Caco-2 (cell line): ENCODE measurements at regions of chr9 and their contacts with region 1.

Region 1: GRCh38 chr9:90102292-90102901 is 497.6 kb downstream of the GADD45G start:
- DNase-seq: peak; percentile 73 to 81
- H3K4me3 ChIP-seq: no peak overlapping the region
- H3K4me3 Mint-ChIP-seq: no peak overlapping the region
- H3K27ac Mint-ChIP-seq: no peak overlapping the region
- H3K4me1 ChIP-seq: no peaks in the 10 kb centered on the region
- H3K4me1 Mint-ChIP-seq: no peaks in the 10 kb centered on the region
- H3K27me3 ChIP-seq: no peaks in the 10 kb centered on the region
- H3K27me3 Mint-ChIP-seq: no peaks in the 10 kb centered on the region
- CTCF ChIP-seq: peak; percentile 61 to 68

Region 2: GRCh38 chr9:89597711-89598625 is 504.4 kb before region 1 on chr9:
- CTCF ChIA-PET with region 1: interaction called, 55 read pairs
- POLR2A ChIA-PET with region 1: no interaction called
- intact Hi-C with region 1: loop called (anchors 1 kb)
- DNase-seq: peak in 1 of 2 experiments; percentile 61
- H3K4me3 ChIP-seq: no peak overlapping the region
- H3K4me3 Mint-ChIP-seq: no peak overlapping the region
- H3K27ac Mint-ChIP-seq: no peak overlapping the region
- H3K4me1 ChIP-seq: peaks cover 11% of the 10 kb centered on the region
- H3K4me1 Mint-ChIP-seq: peaks cover 5% of the 10 kb centered on the region
- H3K27me3 ChIP-seq: no peaks in the 10 kb centered on the region
- H3K27me3 Mint-ChIP-seq: no peaks in the 10 kb centered on the region
- CTCF ChIP-seq: peak; percentile 57 to 62

Region 3: DNA sequence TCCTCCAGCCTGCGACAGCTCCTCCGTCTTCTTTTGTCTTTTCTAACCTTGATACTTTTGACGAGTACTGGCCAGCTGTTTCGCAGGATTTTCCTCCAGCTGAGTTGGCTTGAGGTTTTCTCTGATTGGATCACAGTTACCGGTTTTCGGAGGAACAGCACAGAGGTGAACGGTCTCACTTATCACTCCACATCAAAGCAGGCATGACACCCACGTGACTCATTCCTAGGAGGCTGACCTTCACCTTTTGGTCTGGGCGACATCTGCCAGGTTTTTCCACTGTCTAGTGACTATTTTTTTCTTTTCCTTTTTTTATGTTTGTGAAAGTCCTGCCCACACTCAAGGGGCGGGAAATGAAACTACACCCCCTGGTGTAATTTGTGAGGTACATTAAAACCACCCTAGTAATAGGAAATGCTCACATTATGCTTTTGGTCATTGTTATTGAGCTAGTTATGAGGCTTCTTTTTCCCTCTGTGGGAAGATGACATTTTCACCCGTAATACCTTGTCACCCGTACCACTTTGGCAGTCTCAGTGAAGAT is 178.4 kb before region 1 on chr9:
- CTCF ChIA-PET with region 1: interaction called, 3 read pairs
- POLR2A ChIA-PET with region 1: interaction called, 3 read pairs
- intact Hi-C with region 1: loop called (anchors 5 kb)
- DNase-seq: peak; percentile 71 to 80
- H3K4me3 ChIP-seq: no peak overlapping the region
- H3K4me3 Mint-ChIP-seq: peak overlapping the region; percentile 67
- H3K27ac Mint-ChIP-seq: peak overlapping the region; percentile 84
- H3K4me1 ChIP-seq: peaks cover 34% of the 10 kb centered on the region
- H3K4me1 Mint-ChIP-seq: peaks cover 53% of the 10 kb centered on the region
- H3K27me3 ChIP-seq: no peaks in the 10 kb centered on the region
- H3K27me3 Mint-ChIP-seq: no peaks in the 10 kb centered on the region
- CTCF ChIP-seq: no peak

Region 4: DNA sequence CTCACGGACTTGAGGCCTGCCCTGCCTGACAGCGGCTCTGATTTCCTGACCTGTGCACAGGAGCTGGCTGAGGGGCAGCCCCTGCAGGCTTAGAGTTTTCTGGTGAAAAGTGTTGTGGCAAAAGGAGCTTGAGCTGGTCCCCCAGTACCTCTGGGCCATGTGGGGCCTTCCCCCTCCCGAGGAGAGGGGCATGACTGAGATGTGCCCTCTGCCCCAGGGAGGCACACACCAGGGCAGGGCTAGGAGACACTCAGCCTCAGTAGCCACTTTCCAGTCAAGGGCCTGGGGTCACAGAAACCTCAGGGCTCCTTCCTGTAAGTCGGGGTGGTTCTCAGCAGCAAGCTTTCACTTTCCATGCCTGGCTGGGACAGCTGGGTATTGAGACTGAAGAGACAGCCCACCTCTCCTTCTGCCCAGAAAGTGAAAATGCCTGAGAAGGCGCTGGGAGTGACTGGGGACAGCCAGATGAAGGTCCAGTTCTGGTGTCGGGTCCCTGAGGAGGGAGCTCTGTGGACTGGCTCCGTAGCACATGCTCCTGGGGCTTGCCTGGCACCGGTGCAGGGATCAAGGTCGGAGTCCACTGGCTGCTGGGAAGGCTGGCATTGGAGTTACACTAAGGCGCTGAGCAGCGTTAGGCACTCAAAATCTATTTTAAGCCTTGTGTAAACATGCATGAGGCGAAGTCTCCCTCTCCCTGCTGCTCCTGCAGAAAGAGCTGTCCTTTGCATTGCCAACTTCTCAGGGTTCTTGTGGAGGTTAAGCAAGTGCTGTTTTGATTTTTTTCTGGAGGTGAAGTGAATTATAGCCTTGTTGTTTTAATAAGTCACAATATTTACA is 102.6 kb before region 1 on chr9:
- CTCF ChIA-PET with region 1: no interaction called
- POLR2A ChIA-PET with region 1: no interaction called
- intact Hi-C with region 1: loop called (anchors 5 kb)
- DNase-seq: peak; percentile 37 to 52
- H3K4me3 ChIP-seq: no peak overlapping the region
- H3K4me3 Mint-ChIP-seq: peak overlapping the region; percentile 38
- H3K27ac Mint-ChIP-seq: peak overlapping the region; percentile 35
- H3K4me1 ChIP-seq: peaks cover 26% of the 10 kb centered on the region
- H3K4me1 Mint-ChIP-seq: peaks cover 11% of the 10 kb centered on the region
- H3K27me3 ChIP-seq: no peaks in the 10 kb centered on the region
- H3K27me3 Mint-ChIP-seq: no peaks in the 10 kb centered on the region
- CTCF ChIP-seq: no peak

Region 5: GRCh38 chr9:90124961-90125360 is 22.6 kb after region 1 on chr9:
- CTCF ChIA-PET with region 1: no interaction called
- POLR2A ChIA-PET with region 1: no interaction called
- intact Hi-C with region 1: no loop called
- DNase-seq: no peak
- H3K4me3 ChIP-seq: no peak overlapping the region
- H3K4me3 Mint-ChIP-seq: no peak overlapping the region
- H3K27ac Mint-ChIP-seq: no peak overlapping the region
- H3K4me1 ChIP-seq: no peaks in the 10 kb centered on the region
- H3K4me1 Mint-ChIP-seq: no peaks in the 10 kb centered on the region
- H3K27me3 ChIP-seq: no peaks in the 10 kb centered on the region
- H3K27me3 Mint-ChIP-seq: peaks cover 10% of the 10 kb centered on the region
- CTCF ChIP-seq: no peak

Region 6: GRCh38 chr9:90165281-90165680 is 62.9 kb after region 1 on chr9:
- CTCF ChIA-PET with region 1: no interaction called
- POLR2A ChIA-PET with region 1: no interaction called
- intact Hi-C with region 1: no loop called
- DNase-seq: no peak
- H3K4me3 ChIP-seq: no peak overlapping the region
- H3K4me3 Mint-ChIP-seq: no peak overlapping the region
- H3K27ac Mint-ChIP-seq: no peak overlapping the region
- H3K4me1 ChIP-seq: peaks cover 4% of the 10 kb centered on the region; the same call in 1 of the 2 replicates
- H3K4me1 Mint-ChIP-seq: no peaks in the 10 kb centered on the region
- H3K27me3 ChIP-seq: no peaks in the 10 kb centered on the region
- H3K27me3 Mint-ChIP-seq: no peaks in the 10 kb centered on the region
- CTCF ChIP-seq: no peak